Motor neuron (in vitro differentiated cells): ENCODE measurements at regions of chr7 and their contacts with region 1.

Region 1: DNA sequence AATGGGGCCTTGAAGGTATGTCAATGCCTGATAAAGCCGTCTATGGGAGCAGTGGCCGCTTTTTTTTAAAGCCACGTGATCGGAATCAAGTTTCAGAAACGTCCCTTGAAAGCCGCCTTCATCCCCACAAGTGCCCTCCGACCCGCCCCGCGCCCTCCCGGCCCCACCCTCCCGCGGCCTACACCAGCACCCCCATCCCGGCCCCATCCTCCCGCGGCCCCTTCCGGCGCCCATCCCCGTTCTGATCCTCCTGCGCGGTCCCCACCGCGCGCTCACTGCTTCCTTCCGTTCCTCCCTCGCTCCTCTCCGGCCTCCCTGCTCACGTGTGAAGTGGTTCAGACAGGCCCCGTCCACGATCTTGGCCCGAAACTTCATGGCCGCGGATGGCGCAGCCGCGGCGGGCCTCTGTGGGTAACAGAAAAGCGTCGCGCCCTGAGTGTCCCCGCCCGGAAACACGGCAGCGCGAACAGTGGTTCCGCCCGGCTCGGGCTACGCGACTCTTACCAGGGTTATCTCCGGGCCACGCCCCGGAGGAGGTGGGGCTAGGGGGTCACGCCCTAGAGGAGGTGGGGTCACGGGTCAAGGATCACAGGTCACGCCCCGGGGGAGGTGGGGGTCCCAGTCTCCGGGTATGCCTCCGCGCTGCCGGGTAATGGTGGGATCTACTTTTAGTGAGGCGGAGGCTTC is at the start of gene HUS1:
- ATAC-seq: peak; percentile 94 to 98 (median 96)
- H3K4me3 ChIP-seq: peak within 1 kb of the TSS; percentile 46 to 68 (median 52)
- H3K27ac ChIP-seq: peak within 1 kb of the TSS; percentile 47 to 90
- H3K4me1 ChIP-seq: peaks cover 4 to 15% of the 10 kb centered on the region in 2 donors
- total RNA-seq, gene HUS1: 11.1 to 27.4 (median 20.3) TPM

Region 2: DNA sequence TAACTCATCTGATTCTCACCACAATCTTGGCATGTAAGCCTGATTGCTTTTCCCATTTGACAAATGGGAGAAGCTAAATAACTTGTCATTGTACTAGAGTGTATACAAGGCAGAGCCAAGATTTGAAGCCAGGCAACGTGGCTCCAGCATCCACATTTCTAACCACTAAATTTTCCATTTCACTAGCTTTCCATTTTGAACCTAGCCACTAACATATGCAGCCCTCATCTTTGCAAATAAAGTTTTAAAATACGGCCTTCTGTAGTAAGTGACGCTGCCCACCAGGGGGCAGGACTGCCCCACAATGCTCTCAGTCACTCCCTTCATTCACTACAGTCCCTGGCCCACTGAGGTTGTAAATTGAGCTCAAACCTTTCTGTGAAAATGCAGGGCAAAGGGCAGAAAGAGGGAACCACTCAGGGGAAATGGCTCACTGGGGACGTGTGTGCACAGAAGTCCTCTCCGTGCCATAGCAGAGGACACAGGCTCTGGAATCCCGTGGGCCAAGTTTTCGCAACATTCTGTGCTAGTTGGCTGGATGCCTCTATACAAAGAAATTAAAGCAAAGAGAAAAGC is 713.1 kb before region 1 on chr7:
- in situ Hi-C with region 1: no loop called
- ATAC-seq: peak; percentile 84 to 93 (median 88)
- H3K4me3 ChIP-seq: no peak overlapping the region
- H3K27ac ChIP-seq: no peak overlapping the region
- H3K4me1 ChIP-seq: no peaks in the 10 kb centered on the region

Region 3: GRCh38 chr7:48088559-48089045 is 109.3 kb after region 1 on chr7:
- in situ Hi-C with region 1: loop called in 2 of 9 experiments (anchors 25 kb)
- ATAC-seq: peak; percentile 58 to 78 (median 72)
- H3K4me3 ChIP-seq: peak overlapping the region; percentile 78 to 92 (median 89)
- H3K27ac ChIP-seq: peak overlapping the region; percentile 13 to 77
- H3K4me1 ChIP-seq: peaks cover 6 to 13% of the 10 kb centered on the region in 2 donors

Region 4: GRCh38 chr7:48109848-48110663 is 130.8 kb after region 1 on chr7:
- in situ Hi-C with region 1: loop called in 1 of 9 experiments (anchors 25 kb)
- ATAC-seq: peak; percentile 12 to 75 (median 56)
- H3K4me3 ChIP-seq: no peak overlapping the region
- H3K27ac ChIP-seq: no peak overlapping the region
- H3K4me1 ChIP-seq: no peaks in the 10 kb centered on the region